ENCODE measurements at regions of chr1 and their contacts with region 1.

Region 1: DNA sequence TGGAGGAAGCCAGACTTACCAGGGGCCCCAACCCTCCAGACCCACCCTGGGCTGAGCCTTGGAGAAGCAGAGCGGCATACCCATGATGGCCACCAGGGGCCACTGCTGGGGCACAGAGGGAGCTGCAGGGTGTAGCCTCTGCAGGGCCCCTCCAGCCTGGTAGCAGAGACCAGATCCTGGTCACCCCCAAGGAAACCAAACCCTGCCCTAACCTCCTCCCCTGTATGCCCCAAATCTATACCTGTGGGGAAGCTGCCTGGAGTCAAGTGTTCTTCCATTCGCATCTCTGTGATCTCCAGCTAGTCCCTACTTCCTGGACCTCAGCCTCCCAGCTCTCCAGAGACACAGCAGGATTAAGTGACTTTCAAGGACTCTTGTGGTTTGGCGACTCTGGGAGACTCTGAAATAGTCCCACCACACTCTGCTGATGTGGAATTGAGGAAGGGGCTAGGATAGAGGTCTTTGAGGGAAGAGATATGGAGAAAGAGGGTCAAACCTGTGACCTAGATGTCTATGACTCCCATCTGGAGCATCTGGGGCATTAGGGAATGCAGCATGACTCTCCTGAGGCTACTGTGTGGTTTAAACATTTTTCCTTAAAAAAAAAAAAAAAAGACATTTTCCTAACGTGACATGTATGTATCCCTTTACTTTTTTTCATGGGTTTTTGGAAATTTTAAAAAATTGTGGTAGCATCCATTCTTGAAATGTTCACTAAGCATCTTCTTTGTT is 119.2 kb upstream of the IPO9 start:
- DNase-seq: peak; percentile 67
- H3K4me3 ChIP-seq: no peak overlapping the region
- H3K27ac ChIP-seq: peak overlapping the region; percentile 0
- H3K4me1 ChIP-seq: peaks cover 36% of the 10 kb centered on the region
- H3K27me3 ChIP-seq: no peaks in the 10 kb centered on the region
- CTCF ChIP-seq: peak; percentile 80 to 97
- POLR2A ChIP-seq: no peak

Region 2: GRCh38 chr1:201625226-201625761 is 84.4 kb before region 1 on chr1:
- CTCF ChIA-PET with region 1: no interaction called
- POLR2A ChIA-PET with region 1: no interaction called
- dilution Hi-C with region 1: no loop called
- intact Hi-C with region 1: no loop called
- DNase-seq: peak; percentile 46
- H3K4me3 ChIP-seq: no peak overlapping the region
- H3K27ac ChIP-seq: no peak overlapping the region
- H3K4me1 ChIP-seq: peaks cover 3% of the 10 kb centered on the region
- H3K27me3 ChIP-seq: no peaks in the 10 kb centered on the region
- CTCF ChIP-seq: no peak
- POLR2A ChIP-seq: no peak

Region 3: GRCh38 chr1:201739492-201740085 is 29.9 kb after region 1 on chr1:
- CTCF ChIA-PET with region 1: interaction called, 139 read pairs
- POLR2A ChIA-PET with region 1: no interaction called
- dilution Hi-C with region 1: no loop called
- intact Hi-C with region 1: no loop called
- DNase-seq: peak; percentile 61
- H3K4me3 ChIP-seq: peak overlapping the region; percentile 69 to 92 (median 91)
- H3K27ac ChIP-seq: peak overlapping the region; percentile 44
- H3K4me1 ChIP-seq: peaks cover 27% of the 10 kb centered on the region
- H3K27me3 ChIP-seq: no peaks in the 10 kb centered on the region
- CTCF ChIP-seq: peak in 1 of 2 donors; percentile 13
- POLR2A ChIP-seq: no peak

Region 4: GRCh38 chr1:201748335-201748734 is 38.6 kb after region 1 on chr1:
- CTCF ChIA-PET with region 1: interaction called, 139 read pairs
- POLR2A ChIA-PET with region 1: no interaction called
- dilution Hi-C with region 1: no loop called
- intact Hi-C with region 1: loop called (anchors 1 kb)
- DNase-seq: peak; percentile 84
- H3K4me3 ChIP-seq: no peak overlapping the region
- H3K27ac ChIP-seq: peak overlapping the region; percentile 99
- H3K4me1 ChIP-seq: peaks cover 64% of the 10 kb centered on the region
- H3K27me3 ChIP-seq: no peaks in the 10 kb centered on the region
- CTCF ChIP-seq: no peak
- POLR2A ChIP-seq: peak; percentile 46

Region 5: DNA sequence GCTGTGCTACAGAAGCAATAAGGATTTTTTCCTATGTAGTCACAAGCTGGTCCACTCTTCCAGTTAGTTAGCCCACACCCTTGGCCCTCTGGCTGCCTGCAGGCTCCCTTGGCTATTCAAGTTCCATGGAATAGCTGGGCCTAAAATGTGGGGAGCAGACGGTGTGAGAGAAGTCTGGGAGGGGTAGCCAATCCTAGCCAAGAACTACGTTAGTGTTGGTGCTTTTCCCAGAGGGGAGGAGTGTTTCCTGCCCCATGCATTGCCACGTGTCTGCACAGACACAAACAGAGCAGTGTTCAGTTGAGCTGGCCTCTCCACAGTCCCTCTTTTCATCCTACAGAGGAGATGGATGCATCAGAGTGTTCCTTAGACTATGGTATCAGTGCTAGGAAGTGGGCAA is 60.2 kb after region 1 on chr1:
- CTCF ChIA-PET with region 1: interaction called, 13 read pairs
- POLR2A ChIA-PET with region 1: interaction called, 7 read pairs
- dilution Hi-C with region 1: no loop called
- intact Hi-C with region 1: no loop called
- DNase-seq: peak; percentile 70
- H3K4me3 ChIP-seq: no peak overlapping the region
- H3K27ac ChIP-seq: no peak overlapping the region
- H3K4me1 ChIP-seq: peaks cover 41% of the 10 kb centered on the region
- H3K27me3 ChIP-seq: no peaks in the 10 kb centered on the region
- CTCF ChIP-seq: no peak
- POLR2A ChIP-seq: no peak

Region 6: DNA sequence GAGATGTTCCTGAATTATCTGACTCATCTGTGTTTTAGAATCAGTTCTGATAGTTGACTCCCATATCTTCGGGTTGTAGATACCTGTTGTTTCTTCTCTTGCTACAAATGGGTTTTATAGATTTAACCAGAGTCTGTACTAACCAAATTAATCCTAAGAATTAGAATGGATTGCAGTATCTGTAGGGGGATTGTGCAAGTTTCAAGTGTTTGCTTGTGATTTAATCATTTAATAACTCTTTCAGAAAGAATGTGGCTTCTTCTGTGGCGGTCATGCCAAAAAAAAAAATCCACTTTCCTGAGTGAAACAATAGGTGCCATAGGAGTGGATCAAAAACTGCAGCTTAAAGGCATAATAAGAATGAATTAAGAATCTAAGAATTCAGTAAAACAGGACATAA is 128.7 kb after region 1 on chr1:
- CTCF ChIA-PET with region 1: no interaction called
- POLR2A ChIA-PET with region 1: no interaction called
- dilution Hi-C with region 1: no loop called
- intact Hi-C with region 1: no loop called
- DNase-seq: no peak
- H3K4me3 ChIP-seq: no peak overlapping the region
- H3K27ac ChIP-seq: no peak overlapping the region
- H3K4me1 ChIP-seq: peaks cover 7% of the 10 kb centered on the region
- H3K27me3 ChIP-seq: no peaks in the 10 kb centered on the region
- CTCF ChIP-seq: no peak
- POLR2A ChIP-seq: no peak

Region 7: DNA sequence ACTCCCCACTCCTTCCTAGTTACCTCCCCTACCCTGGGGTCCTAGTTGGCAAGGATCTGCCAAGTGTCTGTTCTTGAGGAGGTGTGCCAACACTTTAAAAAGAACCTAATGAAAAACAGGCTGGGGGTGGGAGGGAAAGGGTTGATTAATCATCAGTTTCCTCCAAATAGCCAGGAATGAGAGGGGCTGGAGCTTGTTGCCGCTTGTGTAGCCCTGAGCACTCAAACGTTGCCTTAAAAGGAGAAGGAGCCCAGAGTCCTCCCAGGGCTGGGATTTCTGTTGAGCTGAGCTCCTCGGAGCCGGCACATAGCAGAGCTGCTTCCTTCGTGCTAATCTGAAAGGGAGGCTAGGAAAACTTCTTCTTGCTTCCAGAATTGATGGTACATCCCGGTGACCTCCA is 194.8 kb after region 1 on chr1:
- CTCF ChIA-PET with region 1: no interaction called
- POLR2A ChIA-PET with region 1: no interaction called
- dilution Hi-C with region 1: no loop called
- intact Hi-C with region 1: no loop called
- DNase-seq: peak; percentile 81
- H3K4me3 ChIP-seq: no peak overlapping the region
- H3K27ac ChIP-seq: peak overlapping the region; percentile 30
- H3K4me1 ChIP-seq: peaks cover 13% of the 10 kb centered on the region
- H3K27me3 ChIP-seq: no peaks in the 10 kb centered on the region
- CTCF ChIP-seq: no peak
- POLR2A ChIP-seq: no peak

Measured in endothelial cell of umbilical vein (primary cell).